ENCODE measurements at regions of chr2 and their contacts with region 1.

Region 1: DNA sequence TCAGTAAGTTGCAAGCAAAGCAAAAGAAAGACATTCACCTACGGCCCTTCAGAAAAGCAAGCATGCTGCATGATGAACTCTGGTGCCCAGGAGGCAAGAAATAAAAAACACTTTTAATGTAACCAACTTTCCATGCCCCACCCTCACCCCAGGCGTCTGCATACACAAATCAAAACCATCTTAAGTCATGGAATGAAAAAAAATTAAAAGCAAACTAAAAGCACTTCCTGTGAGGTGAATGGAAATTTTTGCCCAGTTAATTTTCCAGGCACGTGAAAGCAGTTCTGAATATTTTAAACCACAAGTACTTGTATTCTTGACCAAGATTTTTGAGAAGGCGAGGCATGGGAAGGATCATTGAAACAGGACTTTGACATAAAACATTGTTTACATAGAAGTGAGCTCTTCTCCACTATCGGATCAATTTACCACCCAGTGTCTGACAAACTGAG is 2.5 kb upstream of the ICOS start:
- DNase-seq: peak; percentile 86
- H3K4me3 Mint-ChIP-seq: peak overlapping the region; percentile 79
- H3K27ac Mint-ChIP-seq: peak overlapping the region; percentile 92
- H3K4me1 Mint-ChIP-seq: peaks cover 37% of the 10 kb centered on the region
- H3K27me3 Mint-ChIP-seq: no peaks in the 10 kb centered on the region

Region 2: DNA sequence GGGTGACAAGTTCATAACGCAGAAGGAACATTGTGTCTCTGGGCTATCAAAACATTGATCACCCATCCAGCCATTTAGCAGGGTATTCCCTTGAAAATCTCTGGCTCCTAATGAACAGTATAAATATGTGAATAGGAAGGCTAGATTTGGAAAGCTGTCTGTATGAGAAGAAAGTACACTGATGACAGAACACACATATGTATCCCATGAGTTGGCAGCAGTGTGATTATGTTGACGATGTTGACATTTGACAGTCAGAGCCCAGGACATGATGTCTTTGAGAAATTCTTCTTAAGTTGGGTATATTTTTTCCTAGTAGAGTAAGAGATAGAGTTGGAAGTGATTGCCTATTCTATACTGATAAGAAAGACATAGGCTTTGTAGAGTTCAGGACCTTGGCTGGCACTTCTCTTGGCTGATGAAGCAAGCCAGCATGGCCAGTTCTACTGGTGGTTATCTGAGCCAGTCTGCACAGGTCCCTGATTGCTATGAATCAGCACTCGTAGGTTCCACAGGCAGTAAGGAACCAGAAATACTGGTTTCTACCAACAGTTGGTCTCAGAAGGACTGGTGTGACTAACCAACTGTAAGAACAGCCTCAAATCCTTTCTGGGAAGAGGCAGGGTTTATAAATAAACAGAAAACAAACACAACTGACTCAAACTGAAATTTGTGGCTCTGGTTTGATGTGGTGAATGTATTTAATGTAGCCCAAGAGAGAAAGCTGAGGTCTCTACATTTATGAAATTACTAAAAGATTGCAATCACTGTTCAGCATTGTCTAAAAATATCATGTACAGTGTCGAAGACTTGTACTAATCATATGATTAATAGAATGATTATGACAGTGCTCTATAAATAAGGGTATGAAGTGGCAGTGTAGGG is 355.1 kb before region 1 on chr2:
- intact Hi-C with region 1: loop called (anchors 2 kb)
- DNase-seq: peak; percentile 87
- H3K4me3 Mint-ChIP-seq: peak overlapping the region; percentile 37
- H3K27ac Mint-ChIP-seq: peak overlapping the region; percentile 59
- H3K4me1 Mint-ChIP-seq: peaks cover 28% of the 10 kb centered on the region
- H3K27me3 Mint-ChIP-seq: peaks cover 37% of the 10 kb centered on the region

Region 3: DNA sequence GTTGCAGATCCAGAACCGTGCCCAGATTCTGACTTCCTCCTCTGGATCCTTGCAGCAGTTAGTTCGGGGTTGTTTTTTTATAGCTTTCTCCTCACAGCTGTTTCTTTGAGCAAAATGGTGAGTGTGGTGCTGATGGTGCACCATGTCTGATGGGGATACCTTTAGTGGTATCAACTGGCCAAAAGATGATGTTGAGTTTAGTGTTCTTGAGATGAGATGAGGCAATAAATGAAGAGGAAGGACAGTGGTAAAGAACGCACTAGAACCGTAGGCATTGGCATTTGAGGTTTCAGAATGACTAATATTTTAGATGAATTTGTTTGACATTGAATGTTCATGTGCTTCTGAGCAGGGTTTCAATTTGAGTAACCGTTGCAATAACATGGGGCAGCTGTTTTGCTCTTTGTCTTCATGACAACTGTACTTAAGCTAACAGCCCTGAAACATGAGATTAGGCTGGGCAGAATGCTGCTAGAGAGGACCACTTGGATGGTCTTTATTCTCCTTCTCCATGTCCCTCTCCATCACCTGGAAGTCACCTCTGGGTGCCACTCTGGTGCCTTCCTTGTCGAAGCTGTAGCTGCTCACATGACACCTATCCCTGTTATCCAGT is 62.6 kb before region 1 on chr2:
- intact Hi-C with region 1: loop called (anchors 1 kb)
- DNase-seq: peak; percentile 88
- H3K4me3 Mint-ChIP-seq: peak overlapping the region; percentile 90
- H3K27ac Mint-ChIP-seq: peak overlapping the region; percentile 100
- H3K4me1 Mint-ChIP-seq: peaks cover 60% of the 10 kb centered on the region
- H3K27me3 Mint-ChIP-seq: no peaks in the 10 kb centered on the region

Region 4: GRCh38 chr2:203916756-203917155 is 17.3 kb before region 1 on chr2:
- intact Hi-C with region 1: loop called (anchors 2 kb)
- DNase-seq: no peak
- H3K4me3 Mint-ChIP-seq: no peak overlapping the region
- H3K27ac Mint-ChIP-seq: no peak overlapping the region
- H3K4me1 Mint-ChIP-seq: peaks cover 28% of the 10 kb centered on the region
- H3K27me3 Mint-ChIP-seq: peaks cover 7% of the 10 kb centered on the region

Region 5: GRCh38 chr2:203989521-203989920 is 55.5 kb after region 1 on chr2:
- intact Hi-C with region 1: loop called (anchors 1 kb)
- DNase-seq: no peak
- H3K4me3 Mint-ChIP-seq: peak overlapping the region; percentile 42
- H3K27ac Mint-ChIP-seq: peak overlapping the region; percentile 77
- H3K4me1 Mint-ChIP-seq: peaks cover 32% of the 10 kb centered on the region
- H3K27me3 Mint-ChIP-seq: no peaks in the 10 kb centered on the region

Region 6: DNA sequence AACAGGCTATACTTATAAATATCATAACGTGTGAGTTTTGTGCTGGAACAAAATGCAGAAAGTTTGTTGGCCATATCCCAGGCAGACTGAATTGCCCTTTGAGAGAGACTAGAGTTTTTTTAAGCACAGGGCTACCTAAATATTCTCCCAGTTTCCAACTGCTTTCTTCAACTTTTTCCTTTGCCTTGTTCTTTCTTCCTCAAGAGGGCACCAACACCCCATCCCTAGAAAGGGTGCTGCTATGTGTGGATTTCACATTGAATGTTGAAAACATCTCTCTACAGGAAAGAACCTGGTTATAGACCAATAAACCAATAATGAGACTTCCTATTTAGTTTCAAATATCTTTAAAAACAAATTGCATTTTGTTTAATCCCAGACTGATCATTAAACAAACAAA is 90.4 kb after region 1 on chr2:
- intact Hi-C with region 1: loop called (anchors 1 kb)
- DNase-seq: peak; percentile 78
- H3K4me3 Mint-ChIP-seq: no peak overlapping the region
- H3K27ac Mint-ChIP-seq: no peak overlapping the region
- H3K4me1 Mint-ChIP-seq: peaks cover 51% of the 10 kb centered on the region
- H3K27me3 Mint-ChIP-seq: no peaks in the 10 kb centered on the region

Region 7: DNA sequence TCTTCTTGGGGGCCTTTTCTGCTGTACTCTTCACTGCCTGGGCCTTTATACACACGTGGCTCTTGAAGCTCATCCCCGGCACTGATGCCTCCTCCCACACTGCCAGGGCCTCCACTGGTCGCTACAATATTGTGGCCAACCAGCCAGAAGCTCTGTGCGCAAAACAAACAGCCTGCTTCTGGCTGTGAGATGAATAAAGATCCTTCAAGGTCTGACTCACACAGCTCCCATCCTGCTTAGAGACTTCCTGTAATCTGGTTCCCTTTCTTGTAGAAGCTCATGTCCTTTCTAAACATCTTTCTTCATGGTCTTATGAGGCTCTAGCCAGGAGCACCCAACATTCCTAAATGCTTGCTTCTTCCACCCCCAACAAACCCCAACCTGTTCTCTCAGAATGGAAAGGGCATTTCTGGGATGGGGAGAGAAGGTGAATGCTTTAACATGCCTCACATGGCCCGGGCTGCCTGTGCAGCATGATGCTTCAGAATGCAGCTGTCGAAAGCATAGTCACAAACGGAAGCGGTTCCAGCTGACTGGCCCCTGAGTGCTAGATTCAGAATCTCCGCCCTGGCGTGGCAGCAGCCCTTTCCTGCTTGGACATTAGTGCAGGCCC is 1772.8 kb after region 1 on chr2:
- intact Hi-C with region 1: loop called (anchors 10 kb)
- DNase-seq: peak; percentile 86
- H3K4me3 Mint-ChIP-seq: peak overlapping the region; percentile 54
- H3K27ac Mint-ChIP-seq: peak overlapping the region; percentile 93
- H3K4me1 Mint-ChIP-seq: peaks cover 48% of the 10 kb centered on the region
- H3K27me3 Mint-ChIP-seq: no peaks in the 10 kb centered on the region